GM10248 (cell line): ENCODE measurements at regions of chr19 and their contacts with region 1.

Region 1: GRCh38 chr19:16088351-16089009 is 12.2 kb downstream of the TPM4 start:
- DNase-seq: no peak
- CTCF ChIP-seq: no peak

Region 2: DNA sequence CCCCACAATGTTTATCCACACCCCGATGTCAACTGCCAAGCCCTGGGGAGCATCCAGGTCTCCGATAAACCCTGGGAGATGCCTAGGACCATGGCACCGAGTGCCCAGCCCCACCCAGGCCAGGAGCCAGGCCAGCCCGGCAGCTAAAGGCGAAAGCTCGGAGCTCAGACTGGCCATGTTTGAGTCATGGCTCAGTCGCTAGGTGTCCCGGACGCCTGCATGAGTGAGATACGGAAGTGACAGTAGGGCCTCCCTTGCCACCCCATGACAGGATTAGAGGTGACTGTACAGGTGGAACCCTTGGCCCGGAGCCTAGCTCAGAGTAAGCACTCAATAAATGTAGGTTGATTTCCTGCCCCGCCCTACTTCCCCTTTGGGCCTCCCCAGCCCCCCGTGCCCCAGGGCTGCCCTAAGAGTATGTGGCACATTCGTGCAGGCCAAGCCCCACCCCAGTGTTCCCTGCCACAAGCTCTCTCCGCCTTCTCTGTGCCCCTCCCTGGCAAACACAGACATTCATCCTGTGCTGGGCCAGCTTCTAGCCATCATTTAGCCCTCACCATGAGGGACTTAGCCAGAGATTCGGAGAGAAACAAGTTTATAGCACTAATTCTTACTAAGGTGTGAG is 18.0 kb before region 1 on chr19:
- CTCF ChIA-PET with region 1: interaction called, 18 read pairs
- POLR2A ChIA-PET with region 1: interaction called, 5 read pairs
- DNase-seq: peak; percentile 82
- CTCF ChIP-seq: no peak